Head of caudate nucleus (tissue), 42 donors: ENCODE measurements at regions of chr12 and their contacts with region 1.

Region 1: DNA sequence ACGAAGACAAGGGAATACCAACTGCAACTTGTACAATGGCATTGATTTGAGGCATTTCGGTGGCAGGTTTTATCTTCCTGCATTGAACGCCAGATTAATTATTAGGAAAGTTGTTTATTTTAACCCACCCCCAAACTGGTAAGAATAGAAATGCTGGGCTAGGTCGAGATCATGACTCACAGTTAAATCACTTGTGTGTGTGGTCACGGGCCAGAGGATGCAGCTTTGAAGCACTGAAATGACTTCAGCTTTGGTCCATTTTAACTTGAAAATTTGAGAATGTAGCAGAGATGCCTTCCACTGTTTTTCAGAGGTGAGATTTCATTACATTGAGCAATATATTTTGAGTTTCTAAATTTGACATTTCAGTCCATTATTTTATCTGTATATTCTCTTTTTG is 23.6 kb upstream of the KCNH3 start:
- DNase-seq: no peak

Region 2: DNA sequence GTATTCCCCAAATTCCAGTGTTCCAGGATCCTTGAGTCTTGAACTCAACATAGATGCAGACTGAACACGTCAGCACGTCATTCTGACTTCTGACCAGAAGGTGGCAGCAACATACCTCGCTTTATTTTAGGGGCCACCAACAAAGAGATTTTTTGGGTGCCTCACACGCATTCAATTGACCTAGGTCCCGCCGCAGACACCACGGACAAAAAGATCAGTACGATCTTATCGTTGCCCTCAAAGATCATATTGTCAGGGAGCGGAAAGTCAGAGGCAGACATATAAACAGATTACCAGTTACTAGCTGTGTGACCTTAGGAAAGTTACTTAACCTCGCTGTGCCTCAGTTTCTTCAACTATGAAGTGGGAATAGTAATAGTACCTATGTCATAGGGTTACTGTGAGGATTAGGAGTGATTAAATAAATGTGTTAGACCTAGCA is 226.8 kb before region 1 on chr12:
- intact Hi-C with region 1: no loop called
- DNase-seq: peak in 41 of 42 donors; percentile 19 to 86 (median 66)

Region 3: DNA sequence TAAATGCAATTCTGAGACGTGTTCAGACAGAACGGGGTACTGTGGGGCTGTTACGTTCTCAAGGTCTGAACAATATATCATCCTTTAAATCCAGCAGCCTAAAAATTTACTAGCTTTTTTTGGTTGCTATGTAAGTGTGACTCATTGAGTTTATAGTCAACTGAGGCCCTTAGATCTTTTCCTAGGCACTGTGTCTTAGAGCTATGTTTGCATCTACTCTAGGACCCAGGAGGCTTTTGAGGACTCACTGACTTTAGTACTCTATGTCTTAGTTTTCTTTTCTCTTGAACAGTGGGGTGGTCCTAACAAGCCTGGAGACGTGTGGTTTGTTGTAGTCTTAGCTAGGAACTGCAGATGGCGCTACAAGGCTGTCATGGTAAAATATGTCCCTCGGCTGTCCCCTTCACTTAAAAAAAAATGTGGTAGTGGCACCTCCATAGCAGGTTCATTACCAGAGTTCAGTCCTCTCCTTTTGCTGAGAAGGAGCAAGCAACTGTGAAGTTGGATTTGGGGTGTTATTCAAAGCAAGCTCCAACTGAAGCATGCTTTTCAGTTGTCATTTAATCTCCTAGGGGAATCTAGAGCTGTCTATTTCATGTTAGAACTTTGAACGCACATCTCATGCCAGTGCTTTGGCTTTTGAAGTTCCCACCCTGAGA is 156.7 kb before region 1 on chr12:
- intact Hi-C with region 1: loop called (anchors 5 kb)
- DNase-seq: peak in 22 of 42 donors; percentile 31 to 83 (median 58)